Colonic mucosa (tissue), 4 donors: ENCODE measurements at regions of chr14 and their contacts with region 1.

Region 1: DNA sequence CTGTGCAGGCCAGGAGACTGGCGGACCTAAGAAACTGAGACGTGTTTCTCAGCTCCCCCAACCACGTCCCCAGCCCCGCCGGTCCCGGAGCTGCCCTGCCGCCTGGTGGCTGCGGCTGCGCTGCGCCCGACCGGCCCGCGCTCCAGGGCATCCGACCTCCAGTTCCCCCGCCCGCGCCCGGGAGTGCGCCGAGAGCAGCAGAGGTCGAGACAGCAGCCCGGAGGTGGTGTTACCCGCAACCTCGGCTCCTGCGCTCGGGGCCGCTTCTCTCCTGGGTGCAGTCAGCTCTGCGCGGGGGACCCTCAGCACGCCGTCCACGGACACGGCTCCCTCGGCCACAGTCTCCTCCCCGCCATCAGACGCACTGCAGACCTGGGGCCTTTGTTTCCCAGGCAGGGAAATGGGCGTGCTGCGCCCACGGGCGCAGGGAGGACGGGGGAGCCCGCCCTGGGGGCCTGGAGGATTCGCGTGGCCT is 21.6 kb upstream of the GPR132 start:
- DNase-seq: peak; percentile 76
- H3K4me3 ChIP-seq: peak overlapping the region; percentile 25
- H3K27ac ChIP-seq: no peak overlapping the region
- H3K4me1 ChIP-seq: peaks cover 17% of the 10 kb centered on the region
- H3K27me3 ChIP-seq: peaks cover 21% of the 10 kb centered on the region
- CTCF ChIP-seq: peak; percentile 83

Region 2: GRCh38 chr14:105255021-105255507 is 168.2 kb after region 1 on chr14:
- intact Hi-C with region 1: loop called (anchors 10 kb)
- DNase-seq: no peak
- H3K4me3 ChIP-seq: no peak overlapping the region
- H3K27ac ChIP-seq: no peak overlapping the region
- H3K4me1 ChIP-seq: no peaks in the 10 kb centered on the region
- H3K27me3 ChIP-seq: no peaks in the 10 kb centered on the region
- CTCF ChIP-seq: no peak